Activated CD4-positive, alpha-beta memory T cell treated with anti-CD3 and anti-CD28 coated beads, Interleukin-2, amount 10 ng/mL, durations not matched to agents 7 days and 5 days (primary cell): ENCODE measurements at regions of chr7 and their contacts with region 1.

Region 1: DNA sequence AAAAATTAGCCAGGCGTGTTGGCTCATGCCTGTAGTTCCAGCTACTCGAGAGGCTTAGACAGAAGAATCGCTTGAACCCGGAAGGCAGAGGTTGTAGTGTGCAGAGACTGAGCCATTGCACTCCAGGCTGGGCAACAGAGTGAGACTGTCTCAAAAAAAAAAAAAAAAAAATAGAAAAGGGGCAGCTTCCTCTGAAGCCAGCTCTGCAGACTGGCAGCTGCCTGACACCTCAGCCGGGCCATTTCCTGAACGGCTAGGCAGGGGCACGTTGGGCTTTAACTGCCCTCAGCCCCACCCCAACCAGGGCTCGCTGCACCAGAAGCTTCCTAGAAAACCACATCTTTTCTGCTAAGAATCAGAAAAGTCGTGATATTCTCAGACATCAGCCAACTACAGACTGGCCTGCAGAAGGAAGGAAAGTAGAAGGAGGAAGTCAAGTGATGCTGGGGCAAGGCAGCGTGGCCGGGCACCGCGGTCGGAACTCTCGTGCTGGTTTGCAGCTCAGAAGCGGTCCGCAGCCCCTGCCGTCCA is 38.0 kb downstream of the PRKAG2 start:
- DNase-seq: peak; percentile 83
- H3K4me3 Mint-ChIP-seq: peak overlapping the region; percentile 41
- H3K27ac Mint-ChIP-seq: peak overlapping the region; percentile 89
- H3K4me1 Mint-ChIP-seq: peaks cover 33% of the 10 kb centered on the region
- H3K27me3 Mint-ChIP-seq: no peaks in the 10 kb centered on the region

Region 2: GRCh38 chr7:151851145-151851751 is 12.3 kb after region 1 on chr7:
- CTCF ChIA-PET with region 1: interaction called, 4 read pairs
- POLR2A ChIA-PET with region 1: interaction called, 13 read pairs
- DNase-seq: peak; percentile 33
- H3K4me3 Mint-ChIP-seq: peak overlapping the region; percentile 58
- H3K27ac Mint-ChIP-seq: peak overlapping the region; percentile 42
- H3K4me1 Mint-ChIP-seq: peaks cover 14% of the 10 kb centered on the region
- H3K27me3 Mint-ChIP-seq: no peaks in the 10 kb centered on the region

Region 3: GRCh38 chr7:151876899-151877777 is 38.2 kb after region 1 on chr7 and contains the start of gene PRKAG2:
- CTCF ChIA-PET with region 1: interaction called, 4 read pairs
- POLR2A ChIA-PET with region 1: interaction called, 15 read pairs
- DNase-seq: peak; percentile 70
- H3K4me3 Mint-ChIP-seq: peak within 1 kb of the TSS; percentile 89
- H3K27ac Mint-ChIP-seq: peak within 1 kb of the TSS; percentile 69
- H3K4me1 Mint-ChIP-seq: peaks cover 11% of the 10 kb centered on the region
- H3K27me3 Mint-ChIP-seq: peaks cover 3% of the 10 kb centered on the region
- total RNA-seq, gene PRKAG2: 25.4 to 33.7 TPM